Heart left ventricle (tissue), 16 donors: ENCODE measurements at regions of chrX and their contacts with region 1.

Region 1: DNA sequence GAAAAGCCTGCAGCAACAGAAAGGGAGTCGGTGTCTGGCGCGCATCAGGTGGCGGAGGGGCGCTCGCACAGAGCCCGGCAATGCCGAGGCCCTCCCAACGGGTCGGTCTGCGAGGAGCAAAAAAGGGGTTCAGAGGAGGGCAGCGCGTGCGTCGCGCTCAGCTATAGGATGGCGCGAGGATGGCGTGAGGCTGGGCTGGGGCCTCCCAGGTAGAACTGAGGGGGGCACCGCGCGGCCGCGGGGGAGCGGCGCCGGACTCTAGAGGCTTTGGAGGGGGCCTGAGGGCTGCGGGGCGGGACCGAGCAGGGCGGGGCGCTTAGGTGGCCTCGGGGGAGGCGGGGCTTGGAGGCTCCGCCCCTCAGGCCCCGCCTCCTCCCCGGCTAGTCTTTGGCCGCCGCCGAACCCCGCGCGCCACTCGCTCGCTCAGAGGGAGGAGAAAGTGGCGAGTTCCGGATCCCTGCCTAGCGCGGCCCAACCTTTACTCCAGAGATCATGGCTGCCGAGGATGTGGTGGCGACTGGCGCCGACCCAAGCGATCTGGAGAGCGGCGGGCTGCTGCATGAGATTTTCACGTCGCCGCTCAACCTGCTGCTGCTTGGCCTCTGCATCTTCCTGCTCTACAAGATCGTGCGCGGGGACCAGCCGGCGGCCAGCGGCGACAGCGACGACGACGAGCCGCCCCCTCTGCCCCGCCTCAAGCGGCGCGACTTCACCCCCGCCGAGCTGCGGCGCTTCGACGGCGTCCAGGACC is at the start of gene PGRMC1:
- DNase-seq: peak; percentile 80 to 91 (median 82)
- ATAC-seq: peak; percentile 95 to 99 (median 97)
- H3K4me3 ChIP-seq: peak within 1 kb of the TSS; percentile 54 to 96 (median 74)
- H3K27ac ChIP-seq: peak within 1 kb of the TSS; percentile 47 to 89 (median 80)
- H3K4me1 ChIP-seq: peaks cover 0 to 19% (median 1%) of the 10 kb centered on the region in 12 donors
- H3K27me3 ChIP-seq: peaks cover 0 to 9% (median 0%) of the 10 kb centered on the region in 9 donors
- CTCF ChIP-seq: no peak
- POLR2A ChIP-seq: peak in 1 of 2 donors; percentile 79
- total RNA-seq, gene PGRMC1: 12.6 to 28.6 (median 17.1) TPM

Region 2: GRCh38 chrX:118226090-118226428 is 1010.0 kb before region 1 on chrX:
- intact Hi-C with region 1: no loop called
- DNase-seq: no peak
- ATAC-seq: peak in 2 of 4 donors; percentile 42 to 62
- H3K4me3 ChIP-seq: no peak overlapping the region
- H3K27ac ChIP-seq: no peak overlapping the region
- H3K4me1 ChIP-seq: peaks cover 0 to 3% (median 0%) of the 10 kb centered on the region in 12 donors
- H3K27me3 ChIP-seq: peaks cover 0 to 7% (median 0%) of the 10 kb centered on the region in 9 donors
- CTCF ChIP-seq: peak in 10 of 12 donors; percentile 14 to 53 (median 38)
- POLR2A ChIP-seq: no peak

Region 3: DNA sequence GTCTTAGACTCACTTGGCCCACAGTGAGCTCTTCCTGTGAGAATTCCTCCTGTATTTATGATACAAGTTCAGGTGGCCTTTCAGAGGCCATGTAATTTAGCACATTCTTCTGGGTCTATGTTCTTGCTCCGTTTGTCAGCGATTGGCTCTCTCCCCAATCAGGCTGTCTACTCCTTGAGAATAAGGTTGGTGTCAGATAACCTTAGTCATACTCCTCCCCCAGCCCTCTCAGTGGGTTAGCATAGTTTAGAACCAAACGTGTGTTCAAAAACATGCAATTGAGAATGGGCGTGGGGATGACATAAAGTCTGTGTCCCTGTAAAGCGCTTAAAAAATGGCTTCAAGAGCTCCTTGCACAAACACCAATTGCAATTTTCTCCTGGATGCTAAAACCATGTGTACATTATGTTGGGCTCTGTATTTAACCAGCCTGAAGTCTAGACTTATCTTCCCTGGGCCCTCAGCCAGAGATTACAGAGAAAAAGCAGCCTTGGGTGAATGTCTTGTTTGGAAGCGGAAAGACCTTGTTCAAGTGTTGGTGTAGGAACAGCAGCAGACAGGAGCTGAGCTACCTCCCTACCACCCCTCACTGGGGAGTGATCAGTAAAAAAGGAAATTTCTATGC is 173.2 kb before region 1 on chrX:
- intact Hi-C with region 1: no loop called
- DNase-seq: no peak
- ATAC-seq: no peak
- H3K4me3 ChIP-seq: no peak overlapping the region
- H3K27ac ChIP-seq: no peak overlapping the region
- H3K4me1 ChIP-seq: peaks cover 0 to 6% (median 0%) of the 10 kb centered on the region in 12 donors
- H3K27me3 ChIP-seq: peaks cover 0 to 6% (median 0%) of the 10 kb centered on the region in 9 donors
- CTCF ChIP-seq: no peak
- POLR2A ChIP-seq: no peak

Region 4: DNA sequence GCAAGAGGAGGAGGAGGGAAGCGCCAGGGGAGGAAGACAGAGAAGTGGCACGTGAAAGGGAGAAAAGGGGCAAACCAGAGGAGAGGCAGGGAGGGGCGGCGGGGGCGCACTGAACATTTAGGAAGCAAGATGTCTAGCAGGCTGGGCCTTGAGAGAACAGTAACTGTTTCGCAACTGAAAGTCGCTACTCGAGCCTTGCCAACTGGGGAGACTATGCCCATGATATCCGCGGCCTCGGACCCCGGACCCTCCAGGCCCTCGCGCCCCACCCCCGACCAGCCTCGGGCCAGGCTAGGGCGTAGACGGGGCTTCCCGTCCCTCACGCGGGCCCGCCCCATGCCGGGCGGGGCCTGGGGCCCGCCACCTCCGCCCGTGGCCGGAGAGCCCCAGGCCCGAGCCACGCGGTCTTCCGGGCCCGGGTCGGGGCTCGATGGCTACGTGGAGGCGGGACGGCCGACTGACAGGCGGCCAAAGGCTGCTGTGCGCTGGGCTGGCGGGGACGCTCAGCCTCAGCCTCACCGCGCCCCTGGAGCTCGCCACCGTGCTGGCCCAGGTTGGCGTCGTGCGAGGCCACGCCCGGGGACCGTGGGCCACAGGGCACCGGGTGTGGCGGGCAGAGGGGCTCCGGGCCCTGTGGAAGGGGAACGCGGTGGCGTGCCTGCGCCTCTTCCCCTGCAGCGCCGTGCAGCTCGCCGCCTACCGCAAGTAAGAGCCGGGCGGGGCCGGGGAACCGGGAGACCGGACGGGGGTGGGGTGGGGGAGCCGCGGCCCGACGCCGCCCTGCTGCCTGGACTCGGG is 163.1 kb after region 1 on chrX and contains the start of gene SLC25A43:
- intact Hi-C with region 1: loop called in 1 of 10 experiments (anchors 2 kb)
- DNase-seq: peak; percentile 18 to 68 (median 34)
- ATAC-seq: peak; percentile 75 to 96 (median 94)
- H3K4me3 ChIP-seq: peak within 1 kb of the TSS; percentile 50 to 91 (median 68)
- H3K27ac ChIP-seq: peak within 1 kb of the TSS; percentile 24 to 86 (median 76)
- H3K4me1 ChIP-seq: peaks cover 0 to 8% (median 0%) of the 10 kb centered on the region in 12 donors
- H3K27me3 ChIP-seq: no peaks in the 10 kb centered on the region
- CTCF ChIP-seq: no peak
- POLR2A ChIP-seq: no peak
- total RNA-seq, gene SLC25A43: 2.0 to 7.8 (median 3.2) TPM

Region 5: GRCh38 chrX:119468930-119469635 is 233.0 kb after region 1 on chrX:
- intact Hi-C with region 1: loop called in 1 of 10 experiments (anchors 10 kb)
- DNase-seq: peak; percentile 87 to 93 (median 89)
- ATAC-seq: peak; percentile 77 to 89 (median 87)
- H3K4me3 ChIP-seq: peak overlapping the region; percentile 73 to 100 (median 85)
- H3K27ac ChIP-seq: peak overlapping the region; percentile 91 to 99 (median 97)
- H3K4me1 ChIP-seq: peaks cover 0 to 16% (median 0%) of the 10 kb centered on the region in 12 donors
- H3K27me3 ChIP-seq: no peaks in the 10 kb centered on the region
- CTCF ChIP-seq: peak; percentile 56 to 88 (median 74)
- POLR2A ChIP-seq: peak in 1 of 2 donors; percentile 52